ENCODE measurements at regions of chr20 and their contacts with region 1.

Region 1: GRCh38 chr20:38127011-38127621 is 38.0 kb downstream of the TGM2 start:
- DNase-seq: peak in 2 of 5 donors; percentile 55 to 69
- ATAC-seq: peak; percentile 69 to 82 (median 74)
- H3K4me3 ChIP-seq: peak overlapping the region in 1 of 12 donors; percentile 4
- H3K27ac ChIP-seq: peak overlapping the region; percentile 78 to 94 (median 84)
- H3K4me1 ChIP-seq: peaks cover 8 to 53% (median 33%) of the 10 kb centered on the region in 12 donors
- H3K27me3 ChIP-seq: no peaks in the 10 kb centered on the region
- CTCF ChIP-seq: peak in 1 of 12 donors; percentile 10
- POLR2A ChIP-seq: no peak

Region 2: GRCh38 chr20:38043512-38044300 is 83.4 kb before region 1 on chr20:
- intact Hi-C with region 1: no loop called
- DNase-seq: no peak
- ATAC-seq: peak in 1 of 4 donors; percentile 44
- H3K4me3 ChIP-seq: no peak overlapping the region
- H3K27ac ChIP-seq: no peak overlapping the region
- H3K4me1 ChIP-seq: peaks cover 0 to 28% (median 14%) of the 10 kb centered on the region in 12 donors
- H3K27me3 ChIP-seq: no peaks in the 10 kb centered on the region
- CTCF ChIP-seq: no peak
- POLR2A ChIP-seq: no peak

Region 3: GRCh38 chr20:38073307-38074071 is 53.6 kb before region 1 on chr20:
- intact Hi-C with region 1: loop called in 4 of 10 experiments (anchors 5 to 10 kb)
- DNase-seq: peak in 4 of 5 donors; percentile 69 to 85 (median 74)
- ATAC-seq: peak; percentile 72 to 88 (median 83)
- H3K4me3 ChIP-seq: no peak overlapping the region
- H3K27ac ChIP-seq: peak overlapping the region; percentile 45 to 90 (median 83)
- H3K4me1 ChIP-seq: peaks cover 22 to 58% (median 40%) of the 10 kb centered on the region in 12 donors
- H3K27me3 ChIP-seq: no peaks in the 10 kb centered on the region
- CTCF ChIP-seq: peak; percentile 72 to 92 (median 80)
- POLR2A ChIP-seq: no peak

Region 4: GRCh38 chr20:38094373-38094891 is 32.7 kb before region 1 on chr20:
- intact Hi-C with region 1: no loop called
- DNase-seq: peak in 4 of 5 donors; percentile 51 to 74 (median 62)
- ATAC-seq: peak in 3 of 4 donors; percentile 62 to 68 (median 64)
- H3K4me3 ChIP-seq: no peak overlapping the region
- H3K27ac ChIP-seq: peak overlapping the region in 11 of 12 donors; percentile 19 to 92 (median 69)
- H3K4me1 ChIP-seq: peaks cover 8 to 61% (median 49%) of the 10 kb centered on the region in 12 donors
- H3K27me3 ChIP-seq: no peaks in the 10 kb centered on the region
- CTCF ChIP-seq: no peak
- POLR2A ChIP-seq: no peak

Region 5: DNA sequence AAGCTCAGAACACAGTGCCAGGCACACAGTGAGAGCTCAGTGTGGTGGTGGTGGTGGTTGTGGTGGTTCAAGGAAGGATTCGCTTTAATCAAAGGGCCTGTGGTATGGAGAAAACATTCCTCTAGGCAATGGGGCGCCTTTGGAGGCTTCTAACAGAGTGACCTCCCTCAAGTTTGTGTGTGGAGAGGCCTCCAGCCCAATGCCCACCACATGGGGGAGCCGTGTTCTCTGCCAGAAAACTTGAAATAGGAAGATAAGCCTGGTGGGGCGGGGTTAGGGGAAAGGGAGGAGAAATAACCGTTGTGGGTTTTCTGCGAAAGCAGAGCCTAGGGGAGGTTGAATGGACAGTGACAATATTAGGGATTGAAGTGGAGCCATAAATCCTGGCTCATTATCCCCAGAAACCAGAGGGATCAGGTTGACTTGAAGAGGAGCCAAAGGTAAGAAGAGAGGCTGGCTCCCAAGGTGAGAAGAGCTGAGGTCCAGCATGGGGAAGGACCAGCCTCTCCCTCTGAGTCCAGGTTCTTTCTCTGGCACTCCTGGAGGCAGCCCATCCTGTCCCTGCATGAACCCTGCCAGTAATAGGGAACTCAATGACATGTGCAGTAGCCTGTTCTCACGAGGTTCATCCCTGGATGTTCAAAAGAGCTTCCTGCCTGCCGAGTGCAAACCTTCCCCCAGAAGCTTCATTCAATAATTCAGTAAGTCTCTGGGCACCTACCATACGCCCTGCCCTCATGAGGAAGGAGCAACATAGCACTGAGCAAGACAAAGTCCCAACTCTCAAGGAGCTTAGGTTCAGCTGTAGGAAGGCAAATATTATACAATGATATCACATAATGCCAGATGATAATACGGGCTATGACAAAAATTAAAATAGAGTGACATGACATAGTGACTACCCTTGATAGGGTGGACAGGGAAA is 13.5 kb before region 1 on chr20:
- intact Hi-C with region 1: loop called in 2 of 10 experiments (anchors 2 kb)
- DNase-seq: peak in 1 of 5 donors; percentile 38
- ATAC-seq: no peak
- H3K4me3 ChIP-seq: no peak overlapping the region
- H3K27ac ChIP-seq: peak overlapping the region in 8 of 12 donors; percentile 4 to 62 (median 26)
- H3K4me1 ChIP-seq: peaks cover 13 to 54% (median 42%) of the 10 kb centered on the region in 12 donors
- H3K27me3 ChIP-seq: no peaks in the 10 kb centered on the region
- CTCF ChIP-seq: peak in 9 of 12 donors; percentile 8 to 41 (median 19)
- POLR2A ChIP-seq: no peak

Region 6: DNA sequence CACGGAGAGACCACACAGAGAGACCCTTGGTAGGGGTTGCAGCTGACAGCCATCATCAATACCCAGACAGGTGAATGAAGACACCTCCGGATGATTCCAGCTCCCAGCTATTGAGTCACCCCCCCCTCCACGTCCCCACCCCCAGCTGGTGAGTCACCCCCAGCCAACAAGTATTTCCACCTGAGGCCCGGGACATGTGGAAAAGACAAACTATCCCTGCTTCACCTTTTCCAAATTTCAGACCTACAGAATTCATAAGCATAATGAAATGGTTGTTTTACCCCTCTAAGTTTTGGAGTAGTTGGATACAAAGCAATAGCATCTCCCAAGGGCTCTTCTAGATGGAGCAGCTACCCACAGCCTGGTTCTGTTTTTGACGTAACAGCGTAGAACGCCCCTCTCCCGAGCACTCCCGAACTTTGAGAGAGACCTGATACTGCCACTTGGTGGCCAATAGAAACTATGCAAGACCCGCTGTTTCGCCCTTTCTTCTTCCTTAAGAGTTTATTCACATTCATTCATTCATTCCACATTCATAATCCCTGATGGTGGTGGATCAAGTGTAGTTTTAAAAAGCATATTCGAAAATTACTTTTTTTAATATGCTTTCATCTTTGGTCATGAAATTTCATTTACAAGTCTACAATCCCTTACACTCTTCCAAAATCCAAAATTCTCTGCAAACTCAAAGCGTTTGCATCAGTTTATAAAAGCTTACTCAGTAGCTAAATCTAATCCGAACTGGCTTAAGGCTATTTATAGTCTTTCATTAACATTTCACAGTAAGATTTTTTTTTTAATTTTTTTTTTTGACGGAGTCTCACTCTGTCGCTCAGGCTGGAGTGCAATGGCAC is 663.3 kb after region 1 on chr20:
- intact Hi-C with region 1: no loop called
- DNase-seq: no peak
- ATAC-seq: no peak
- H3K4me3 ChIP-seq: no peak overlapping the region
- H3K27ac ChIP-seq: no peak overlapping the region
- H3K4me1 ChIP-seq: no peaks in the 10 kb centered on the region
- H3K27me3 ChIP-seq: no peaks in the 10 kb centered on the region
- CTCF ChIP-seq: peak in 11 of 12 donors; percentile 34 to 78 (median 62)
- POLR2A ChIP-seq: no peak

Measured in heart left ventricle (tissue), 16 donors.